ENCODE measurements at regions of chr4 and their contacts with region 1.

Region 1: DNA sequence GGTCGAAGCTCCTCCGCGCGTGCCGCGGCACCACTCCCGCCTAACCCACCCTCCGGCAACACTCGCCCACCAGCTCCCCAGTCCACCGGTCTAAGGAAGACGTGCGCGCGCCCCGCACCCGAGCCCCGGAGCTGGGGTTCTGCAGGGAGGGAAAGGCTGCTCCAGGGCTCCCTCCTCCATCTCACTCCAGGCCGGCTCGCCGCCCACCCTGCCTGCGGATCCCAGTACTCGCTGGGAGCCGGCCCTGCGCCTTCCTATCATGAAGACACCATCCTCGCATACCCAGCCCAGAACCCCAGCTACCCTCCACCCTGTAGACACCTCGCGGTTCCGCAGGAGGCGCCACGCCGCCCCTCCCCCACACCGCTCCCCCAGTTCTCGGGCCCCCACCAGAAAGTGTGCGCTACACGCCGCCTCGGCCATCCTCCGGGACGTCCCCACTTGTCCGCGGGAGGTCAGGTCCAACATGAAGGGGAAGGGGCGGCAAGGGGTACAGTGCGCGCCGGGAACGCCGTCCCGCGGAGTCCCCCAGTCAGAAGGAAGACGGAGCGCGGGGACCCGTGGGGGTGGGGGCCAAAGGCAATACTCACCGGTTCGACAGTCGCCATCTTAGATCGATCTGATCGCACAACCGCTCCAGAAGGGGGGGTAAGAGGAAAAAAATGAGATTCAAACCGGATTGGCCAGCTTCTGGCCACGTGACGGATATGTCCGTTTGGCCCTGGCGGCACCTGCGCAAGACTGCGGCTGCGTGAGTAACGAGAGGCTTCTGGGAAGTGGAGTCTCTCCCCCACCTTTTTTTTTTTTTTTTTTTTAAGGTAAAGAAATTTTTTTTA is at the start of gene EIF4E:
- DNase-seq: peak; percentile 98
- H3K4me3 Mint-ChIP-seq: peak within 1 kb of the TSS; percentile 87
- H3K27ac Mint-ChIP-seq: peak within 1 kb of the TSS; percentile 99
- H3K4me1 Mint-ChIP-seq: peaks cover 39% of the 10 kb centered on the region
- H3K27me3 Mint-ChIP-seq: no peaks in the 10 kb centered on the region
- total RNA-seq, gene EIF4E: 104 to 116 TPM

Region 2: DNA sequence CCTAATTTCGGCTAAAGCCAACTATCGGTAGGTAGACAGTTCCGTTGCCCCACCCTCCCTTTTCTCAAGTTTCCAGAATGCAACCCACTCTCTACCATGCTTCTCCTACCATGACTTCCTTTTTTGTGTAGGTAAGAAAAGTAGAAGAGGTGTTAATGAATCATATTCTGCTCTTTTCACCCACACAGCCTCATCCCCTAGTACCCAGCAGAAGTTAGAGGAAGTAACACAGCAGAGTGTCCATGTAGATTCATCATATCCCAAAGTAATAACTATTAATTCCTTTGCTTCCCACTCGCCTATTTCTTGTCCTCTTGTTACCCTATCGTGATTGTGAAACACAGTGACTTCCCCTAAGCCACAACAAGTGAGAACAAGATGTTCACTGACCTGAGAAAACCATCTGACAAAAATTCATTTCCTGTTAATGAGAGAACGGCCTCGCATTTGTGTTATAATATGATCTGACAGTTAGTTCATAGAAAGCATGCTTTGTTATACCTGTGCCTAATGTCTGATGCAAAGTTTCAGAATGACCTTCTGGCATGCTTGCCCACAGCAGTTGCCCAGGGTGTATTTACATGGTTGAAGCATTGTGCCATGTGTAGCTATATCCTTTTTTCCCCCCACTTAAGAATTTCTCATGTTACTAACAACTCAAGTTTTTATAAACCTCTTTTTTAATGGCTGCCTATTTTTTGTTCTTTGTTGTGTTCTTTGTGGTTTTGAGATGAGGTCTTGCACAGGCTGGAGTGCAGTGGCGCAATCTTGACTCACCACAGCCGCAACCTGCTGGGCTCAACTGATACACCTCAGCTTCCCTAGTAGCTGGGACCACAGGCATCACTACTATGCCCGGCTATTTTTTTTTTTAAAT is 482.0 kb before region 1 on chr4:
- CTCF ChIA-PET with region 1: no interaction called
- intact Hi-C with region 1: loop called (anchors 1 kb)
- DNase-seq: peak; percentile 72
- H3K4me3 Mint-ChIP-seq: peak overlapping the region; percentile 48
- H3K27ac Mint-ChIP-seq: peak overlapping the region; percentile 76
- H3K4me1 Mint-ChIP-seq: peaks cover 31% of the 10 kb centered on the region
- H3K27me3 Mint-ChIP-seq: no peaks in the 10 kb centered on the region

Region 3: DNA sequence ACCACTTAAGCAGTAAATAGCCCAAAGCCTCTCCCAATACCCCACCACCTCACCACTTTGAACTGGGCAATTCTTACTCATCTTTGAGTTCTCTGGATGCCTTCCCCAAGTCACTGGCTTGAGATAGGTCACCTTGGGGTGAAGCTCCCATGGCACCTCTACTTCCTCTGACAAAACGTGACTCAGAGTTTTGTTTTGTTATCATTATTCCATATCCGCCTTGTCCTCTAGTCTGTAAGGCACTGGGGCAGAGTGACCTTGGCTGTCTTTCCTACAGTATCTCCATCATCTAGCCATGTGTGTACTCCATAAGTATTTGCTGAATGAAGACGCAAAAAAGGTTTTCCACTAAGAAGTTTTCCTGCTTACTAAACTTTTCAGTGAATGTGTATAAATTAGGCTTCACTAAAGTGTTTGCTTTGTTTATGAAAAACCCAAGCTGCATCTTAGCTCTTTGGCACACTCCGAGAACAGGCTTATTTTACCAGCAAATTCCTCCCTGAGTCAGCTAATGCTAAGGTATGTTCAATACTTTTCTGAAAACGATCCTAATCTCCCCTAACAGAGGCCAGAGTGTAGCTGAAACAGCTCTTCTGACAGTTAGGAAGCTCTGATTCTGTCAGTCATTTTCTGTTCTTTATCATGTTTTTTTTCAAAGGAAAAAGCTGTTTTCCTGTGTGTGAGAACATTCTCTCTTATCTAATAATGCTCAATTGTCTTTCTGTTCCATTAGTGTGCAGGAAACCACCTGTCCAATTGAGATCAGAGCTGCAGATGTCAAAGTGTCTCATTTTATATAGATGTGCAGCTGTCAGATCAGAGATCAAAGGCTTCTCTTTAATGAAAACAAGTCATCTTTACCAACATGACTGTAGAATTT is 240.1 kb before region 1 on chr4:
- CTCF ChIA-PET with region 1: no interaction called
- intact Hi-C with region 1: loop called (anchors 1 kb)
- DNase-seq: peak; percentile 53
- H3K4me3 Mint-ChIP-seq: no peak overlapping the region
- H3K27ac Mint-ChIP-seq: peak overlapping the region; percentile 12
- H3K4me1 Mint-ChIP-seq: peaks cover 35% of the 10 kb centered on the region
- H3K27me3 Mint-ChIP-seq: no peaks in the 10 kb centered on the region

Region 4: DNA sequence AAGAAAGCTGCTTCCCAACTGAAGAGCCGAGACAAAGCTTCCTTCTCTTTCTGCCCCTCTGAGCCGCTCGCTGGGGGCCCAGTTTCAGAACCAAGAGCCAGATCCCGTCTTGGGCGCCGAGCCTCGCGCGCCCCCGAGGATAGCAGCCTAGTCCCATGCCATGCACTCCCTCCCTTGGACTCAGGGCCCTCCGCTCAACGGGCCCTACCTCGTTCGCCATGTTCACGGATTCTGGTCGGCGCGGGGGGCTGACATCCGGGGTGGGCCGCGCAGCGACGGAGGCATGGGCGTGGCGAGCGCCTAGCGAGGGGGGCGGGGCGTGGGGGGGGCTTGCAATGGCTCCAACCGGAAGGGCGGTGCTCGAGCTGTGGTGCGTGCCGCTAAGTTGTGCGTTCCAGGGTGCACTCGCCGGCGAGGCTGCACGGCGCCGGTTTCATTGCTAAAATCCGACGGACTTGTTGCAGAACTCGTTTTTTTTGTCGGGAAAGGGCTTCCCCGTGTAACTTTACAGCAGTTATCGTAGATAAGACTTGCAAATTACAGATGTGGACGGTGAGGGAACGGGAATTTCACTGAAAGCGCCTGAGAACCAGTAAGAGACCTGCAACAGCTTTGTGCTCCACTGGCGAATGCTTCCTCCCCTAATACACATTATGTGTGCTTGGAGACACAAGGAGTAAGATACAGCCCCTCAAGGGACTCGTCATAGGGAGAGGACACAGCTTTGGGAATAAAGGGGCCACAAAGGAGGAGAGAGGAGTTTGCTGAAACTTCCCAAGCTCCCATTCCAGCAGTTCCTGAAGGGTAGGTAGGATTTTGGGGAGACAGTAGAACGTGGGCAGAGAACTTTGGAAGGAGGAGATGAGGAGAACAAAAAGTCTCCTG is 160.0 kb after region 1 on chr4 and contains the start of gene ADH5:
- CTCF ChIA-PET with region 1: no interaction called
- intact Hi-C with region 1: loop called (anchors 1 kb)
- DNase-seq: peak; percentile 92
- H3K4me3 Mint-ChIP-seq: peak within 1 kb of the TSS; percentile 96
- H3K27ac Mint-ChIP-seq: peak within 1 kb of the TSS; percentile 95
- H3K4me1 Mint-ChIP-seq: peaks cover 32% of the 10 kb centered on the region
- H3K27me3 Mint-ChIP-seq: no peaks in the 10 kb centered on the region
- total RNA-seq, gene ADH5: 94.3 to 99.9 TPM

Region 5: GRCh38 chr4:99847362-99847976 is 918.7 kb after region 1 on chr4:
- CTCF ChIA-PET with region 1: no interaction called
- intact Hi-C with region 1: loop called (anchors 2 kb)
- DNase-seq: peak; percentile 61
- H3K4me3 Mint-ChIP-seq: peak overlapping the region; percentile 36
- H3K27ac Mint-ChIP-seq: peak overlapping the region; percentile 90
- H3K4me1 Mint-ChIP-seq: peaks cover 76% of the 10 kb centered on the region
- H3K27me3 Mint-ChIP-seq: no peaks in the 10 kb centered on the region

Measured in activated naive CD4-positive, alpha-beta T cell treated with anti-CD3 and anti-CD28 coated beads for 36 hours (primary cell).